Endothelial cell of umbilical vein (primary cell): ENCODE measurements at regions of chr5 and their contacts with region 1.

Region 1: DNA sequence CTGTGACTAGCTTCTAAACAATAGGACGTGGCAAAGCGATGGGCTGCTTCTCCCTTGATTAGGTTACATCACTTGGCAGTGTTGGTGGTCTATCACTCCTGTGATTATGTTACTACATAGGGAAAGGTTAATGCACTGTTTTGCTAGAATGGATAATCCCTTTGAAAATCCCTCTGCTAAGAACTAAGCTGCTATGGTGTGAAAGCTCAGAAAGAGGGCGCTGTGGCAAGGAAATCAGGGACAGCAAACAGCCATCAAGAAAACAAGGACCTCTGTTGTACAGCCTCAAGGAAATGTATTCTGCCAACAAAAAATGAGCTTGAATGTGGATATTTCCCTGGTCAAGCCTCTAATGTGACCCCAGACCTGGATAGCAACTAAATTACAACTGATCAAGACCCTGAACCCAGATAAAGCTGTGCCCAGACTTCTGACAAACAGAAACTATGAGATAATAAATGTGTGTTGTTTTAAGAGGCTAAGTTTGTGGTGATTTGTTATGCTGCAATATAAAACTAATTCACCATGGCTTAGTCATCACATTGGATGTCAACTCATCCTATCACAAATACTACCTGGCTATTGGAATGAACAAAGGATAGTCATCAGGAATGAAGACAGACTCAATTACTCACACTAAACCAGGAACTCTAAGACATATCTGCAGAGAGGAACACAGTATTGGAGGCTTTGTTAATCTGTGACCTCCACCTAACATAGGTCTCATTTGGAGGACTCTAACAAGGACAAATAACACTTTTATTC is 1215.9 kb downstream of the EFNA5 start:
- DNase-seq: peak; percentile 72
- H3K4me3 ChIP-seq: no peak overlapping the region
- H3K27ac ChIP-seq: no peak overlapping the region
- H3K4me1 ChIP-seq: no peaks in the 10 kb centered on the region
- H3K27me3 ChIP-seq: no peaks in the 10 kb centered on the region
- CTCF ChIP-seq: peak; percentile 46 to 62
- POLR2A ChIP-seq: no peak

Region 2: GRCh38 chr5:106106384-106106783 is 348.4 kb before region 1 on chr5:
- CTCF ChIA-PET with region 1: no interaction called
- POLR2A ChIA-PET with region 1: no interaction called
- dilution Hi-C with region 1: no loop called
- intact Hi-C with region 1: no loop called
- DNase-seq: no peak
- H3K4me3 ChIP-seq: no peak overlapping the region
- H3K27ac ChIP-seq: no peak overlapping the region
- H3K4me1 ChIP-seq: no peaks in the 10 kb centered on the region
- H3K27me3 ChIP-seq: no peaks in the 10 kb centered on the region
- CTCF ChIP-seq: no peak
- POLR2A ChIP-seq: no peak

Region 3: DNA sequence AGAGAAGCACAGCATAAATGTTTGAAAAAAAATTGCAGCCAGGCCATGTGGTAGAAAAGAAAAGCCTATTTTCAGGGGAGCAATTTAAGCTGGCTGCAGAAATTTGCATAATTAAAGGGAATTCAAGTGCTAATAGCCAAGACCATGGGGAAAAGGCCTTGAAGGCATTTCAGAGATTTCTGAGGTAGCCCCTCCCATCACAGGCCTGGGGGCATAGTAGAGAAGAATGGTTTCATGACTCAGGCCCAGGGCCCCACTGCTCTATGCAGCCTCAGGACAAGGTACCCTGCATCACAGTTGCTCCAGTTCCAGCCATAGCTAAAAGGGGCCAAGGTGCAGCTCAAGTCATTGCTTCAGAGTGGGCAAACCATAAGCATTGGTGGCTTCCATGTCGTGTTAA is 200.0 kb before region 1 on chr5:
- CTCF ChIA-PET with region 1: no interaction called
- POLR2A ChIA-PET with region 1: no interaction called
- dilution Hi-C with region 1: no loop called
- intact Hi-C with region 1: no loop called
- DNase-seq: no peak
- H3K4me3 ChIP-seq: no peak overlapping the region
- H3K27ac ChIP-seq: no peak overlapping the region
- H3K4me1 ChIP-seq: no peaks in the 10 kb centered on the region
- H3K27me3 ChIP-seq: no peaks in the 10 kb centered on the region
- CTCF ChIP-seq: no peak
- POLR2A ChIP-seq: no peak

Region 4: GRCh38 chr5:106443746-106444145 is 11.1 kb before region 1 on chr5:
- CTCF ChIA-PET with region 1: interaction called, 10 read pairs
- POLR2A ChIA-PET with region 1: no interaction called
- dilution Hi-C with region 1: no loop called
- intact Hi-C with region 1: no loop called
- DNase-seq: no peak
- H3K4me3 ChIP-seq: no peak overlapping the region
- H3K27ac ChIP-seq: no peak overlapping the region
- H3K4me1 ChIP-seq: no peaks in the 10 kb centered on the region
- H3K27me3 ChIP-seq: no peaks in the 10 kb centered on the region
- CTCF ChIP-seq: no peak
- POLR2A ChIP-seq: no peak

Region 5: DNA sequence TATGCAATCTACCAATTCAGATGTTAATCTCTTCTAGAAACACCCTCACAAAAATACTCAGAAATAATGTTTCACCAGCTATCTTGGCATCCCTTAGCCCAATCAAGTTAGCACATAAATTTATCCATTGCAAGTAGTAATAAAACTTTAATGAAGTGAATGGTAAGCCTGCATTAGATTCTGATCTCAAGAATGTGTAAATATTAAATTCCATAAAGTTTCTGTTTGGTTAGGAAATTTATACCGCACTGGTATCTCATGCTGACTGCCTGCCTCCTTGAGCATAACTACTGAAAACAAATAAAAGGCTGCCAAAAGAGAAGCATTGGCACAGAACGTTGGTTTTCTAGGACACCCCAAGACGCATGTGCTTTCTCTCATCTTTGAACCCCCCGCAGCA is 10.6 kb after region 1 on chr5:
- CTCF ChIA-PET with region 1: interaction called, 10 read pairs
- POLR2A ChIA-PET with region 1: no interaction called
- dilution Hi-C with region 1: no loop called
- intact Hi-C with region 1: no loop called
- DNase-seq: no peak
- H3K4me3 ChIP-seq: no peak overlapping the region
- H3K27ac ChIP-seq: no peak overlapping the region
- H3K4me1 ChIP-seq: no peaks in the 10 kb centered on the region
- H3K27me3 ChIP-seq: no peaks in the 10 kb centered on the region
- CTCF ChIP-seq: no peak
- POLR2A ChIP-seq: no peak

Region 6: GRCh38 chr5:107011605-107012004 is 556.8 kb after region 1 on chr5:
- CTCF ChIA-PET with region 1: no interaction called
- POLR2A ChIA-PET with region 1: no interaction called
- dilution Hi-C with region 1: no loop called
- intact Hi-C with region 1: no loop called
- DNase-seq: no peak
- H3K4me3 ChIP-seq: no peak overlapping the region
- H3K27ac ChIP-seq: no peak overlapping the region
- H3K4me1 ChIP-seq: no peaks in the 10 kb centered on the region
- H3K27me3 ChIP-seq: no peaks in the 10 kb centered on the region
- CTCF ChIP-seq: no peak
- POLR2A ChIP-seq: no peak